ENCODE measurements at regions of chr9 and their contacts with region 1.

Region 1: DNA sequence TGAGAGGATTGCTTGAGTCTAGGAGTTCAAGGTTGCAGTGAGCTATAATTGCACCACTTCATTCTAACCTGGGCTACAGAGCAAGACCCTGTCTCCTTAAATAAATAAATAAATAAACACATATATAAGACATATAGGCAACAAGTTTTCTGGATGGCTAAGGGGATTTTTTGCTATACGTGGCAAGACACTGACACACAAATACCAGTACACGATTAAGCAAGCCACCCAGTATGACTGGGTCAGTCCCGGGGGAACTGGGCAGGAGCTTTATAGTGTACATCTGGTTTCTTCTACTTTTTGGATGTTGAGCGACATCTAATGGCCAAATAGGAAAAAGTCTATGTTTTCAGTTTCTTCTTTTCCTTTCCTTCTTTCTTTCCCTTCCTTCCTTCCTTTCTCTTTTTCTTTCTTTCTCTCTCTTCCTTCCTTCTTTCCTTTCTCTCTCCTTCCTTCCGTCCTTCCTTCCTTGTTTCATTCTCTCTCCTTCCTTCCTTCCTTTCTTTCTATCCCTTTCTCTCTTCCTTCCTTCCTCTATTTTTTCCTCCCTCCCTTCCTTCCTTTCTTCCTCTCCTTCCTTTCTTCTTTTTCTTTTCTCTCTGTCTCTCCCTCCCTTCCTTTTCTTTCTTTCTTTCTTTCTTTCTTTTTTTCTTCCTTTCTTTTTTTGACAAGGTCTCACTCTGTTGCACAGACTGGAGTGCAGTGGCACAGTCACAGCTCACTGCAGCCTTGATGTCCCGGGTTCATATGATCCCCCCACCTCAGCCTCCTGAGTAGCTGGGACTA is 47.0 kb upstream of the PLIN2 start:
- DNase-seq: peak; percentile 74
- ATAC-seq: peak; percentile 95
- H3K4me3 Mint-ChIP-seq: peak overlapping the region; percentile 48
- H3K27ac Mint-ChIP-seq: peak overlapping the region; percentile 41
- H3K4me1 Mint-ChIP-seq: peaks cover 25% of the 10 kb centered on the region
- H3K27me3 Mint-ChIP-seq: no peaks in the 10 kb centered on the region

Region 2: DNA sequence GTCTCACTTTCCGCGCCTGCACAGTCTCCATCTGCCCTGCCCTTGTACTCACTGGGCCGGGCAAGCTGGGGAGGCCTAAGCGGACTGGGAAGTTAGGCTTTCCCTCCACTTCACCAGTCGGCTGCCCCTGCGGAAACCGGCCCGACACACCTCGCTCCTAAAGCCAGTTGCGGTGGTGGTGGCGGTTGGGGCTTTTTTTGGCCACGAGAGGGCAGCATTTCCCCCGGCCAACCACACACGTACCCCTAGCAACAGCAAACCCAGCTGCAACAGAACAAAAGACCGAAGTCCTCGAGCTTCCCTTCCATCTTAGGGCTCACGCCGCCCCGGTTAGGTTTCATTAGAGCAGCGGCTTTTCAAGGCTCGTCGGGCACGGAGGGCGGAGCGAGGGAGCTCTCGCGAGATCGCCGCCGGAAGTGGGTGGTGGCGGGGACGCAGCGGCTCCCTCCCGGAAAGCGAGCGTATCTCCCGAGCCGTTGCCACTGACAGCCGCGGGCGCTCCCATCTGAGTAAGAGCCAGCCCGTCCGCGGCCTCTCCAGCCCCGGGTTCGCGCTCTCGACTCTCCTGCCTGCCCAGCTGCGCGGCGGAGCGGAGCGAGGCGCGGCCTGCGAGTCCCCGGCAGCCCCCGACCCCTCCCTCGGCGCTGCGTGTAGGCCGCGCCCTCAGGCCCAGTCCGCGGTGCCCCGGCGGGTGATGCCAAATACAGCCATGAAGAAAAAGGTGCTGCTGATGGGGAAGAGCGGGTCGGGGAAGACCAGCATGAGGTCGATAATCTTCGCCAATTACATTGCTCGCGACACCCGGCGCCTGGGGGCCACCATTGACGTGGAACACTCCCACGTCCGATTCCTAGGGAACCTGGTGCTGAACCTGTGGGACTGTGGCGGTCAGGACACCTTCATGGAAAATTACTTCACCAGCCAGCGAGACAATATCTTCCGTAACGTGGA is 125.1 kb before region 1 on chr9 and contains the start of gene RRAGA:
- CTCF ChIA-PET with region 1: interaction called, 43 read pairs
- DNase-seq: peak; percentile 96
- ATAC-seq: peak; percentile 92
- H3K4me3 Mint-ChIP-seq: peak within 1 kb of the TSS; percentile 93
- H3K27ac Mint-ChIP-seq: peak within 1 kb of the TSS; percentile 99
- H3K4me1 Mint-ChIP-seq: peaks cover 28% of the 10 kb centered on the region
- H3K27me3 Mint-ChIP-seq: no peaks in the 10 kb centered on the region
- total RNA-seq, gene RRAGA: 43.5 to 49.7 TPM

Region 3: GRCh38 chr9:19085295-19085694 is 89.0 kb before region 1 on chr9:
- CTCF ChIA-PET with region 1: interaction called, 20 read pairs
- DNase-seq: no peak
- ATAC-seq: peak; percentile 47
- H3K4me3 Mint-ChIP-seq: no peak overlapping the region
- H3K27ac Mint-ChIP-seq: peak overlapping the region; percentile 2
- H3K4me1 Mint-ChIP-seq: no peaks in the 10 kb centered on the region
- H3K27me3 Mint-ChIP-seq: no peaks in the 10 kb centered on the region

Region 4: DNA sequence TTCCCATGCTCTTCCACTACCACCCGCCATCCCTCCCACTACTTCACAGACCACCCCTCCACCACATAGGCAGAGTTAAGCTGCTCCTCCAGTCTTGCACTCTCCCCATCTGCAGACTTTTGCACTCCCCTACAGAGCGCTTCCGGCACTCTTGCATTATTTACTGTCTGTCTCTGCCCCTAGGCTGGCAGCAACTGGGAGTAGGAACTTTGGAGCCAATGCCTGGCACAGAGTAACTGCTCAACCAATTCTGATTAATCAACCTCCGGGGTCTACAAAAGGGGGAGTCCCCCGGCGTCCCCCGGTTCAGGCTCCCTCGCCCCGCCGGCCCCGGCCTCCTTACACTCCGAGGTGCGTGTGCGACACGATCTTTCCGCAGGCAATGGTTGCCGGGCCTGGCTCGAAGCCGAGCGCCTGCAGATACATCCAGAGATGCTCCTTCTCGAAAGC is 72.1 kb before region 1 on chr9:
- CTCF ChIA-PET with region 1: interaction called, 11 read pairs
- DNase-seq: peak; percentile 70
- ATAC-seq: peak; percentile 37
- H3K4me3 Mint-ChIP-seq: peak overlapping the region; percentile 85
- H3K27ac Mint-ChIP-seq: peak overlapping the region; percentile 97
- H3K4me1 Mint-ChIP-seq: peaks cover 38% of the 10 kb centered on the region
- H3K27me3 Mint-ChIP-seq: no peaks in the 10 kb centered on the region

Region 5: GRCh38 chr9:19127881-19128500 is 46.3 kb before region 1 on chr9:
- CTCF ChIA-PET with region 1: interaction called, 12 read pairs
- DNase-seq: peak; percentile 55
- ATAC-seq: peak; percentile 27
- H3K4me3 Mint-ChIP-seq: peak overlapping the region; percentile 98
- H3K27ac Mint-ChIP-seq: peak overlapping the region; percentile 98
- H3K4me1 Mint-ChIP-seq: peaks cover 55% of the 10 kb centered on the region
- H3K27me3 Mint-ChIP-seq: no peaks in the 10 kb centered on the region

Region 6: GRCh38 chr9:19161257-19162025 is 12.9 kb before region 1 on chr9:
- CTCF ChIA-PET with region 1: interaction called, 12 read pairs
- DNase-seq: peak; percentile 80
- ATAC-seq: peak; percentile 98
- H3K4me3 Mint-ChIP-seq: peak overlapping the region; percentile 33
- H3K27ac Mint-ChIP-seq: peak overlapping the region; percentile 87
- H3K4me1 Mint-ChIP-seq: peaks cover 23% of the 10 kb centered on the region
- H3K27me3 Mint-ChIP-seq: no peaks in the 10 kb centered on the region

Region 7: DNA sequence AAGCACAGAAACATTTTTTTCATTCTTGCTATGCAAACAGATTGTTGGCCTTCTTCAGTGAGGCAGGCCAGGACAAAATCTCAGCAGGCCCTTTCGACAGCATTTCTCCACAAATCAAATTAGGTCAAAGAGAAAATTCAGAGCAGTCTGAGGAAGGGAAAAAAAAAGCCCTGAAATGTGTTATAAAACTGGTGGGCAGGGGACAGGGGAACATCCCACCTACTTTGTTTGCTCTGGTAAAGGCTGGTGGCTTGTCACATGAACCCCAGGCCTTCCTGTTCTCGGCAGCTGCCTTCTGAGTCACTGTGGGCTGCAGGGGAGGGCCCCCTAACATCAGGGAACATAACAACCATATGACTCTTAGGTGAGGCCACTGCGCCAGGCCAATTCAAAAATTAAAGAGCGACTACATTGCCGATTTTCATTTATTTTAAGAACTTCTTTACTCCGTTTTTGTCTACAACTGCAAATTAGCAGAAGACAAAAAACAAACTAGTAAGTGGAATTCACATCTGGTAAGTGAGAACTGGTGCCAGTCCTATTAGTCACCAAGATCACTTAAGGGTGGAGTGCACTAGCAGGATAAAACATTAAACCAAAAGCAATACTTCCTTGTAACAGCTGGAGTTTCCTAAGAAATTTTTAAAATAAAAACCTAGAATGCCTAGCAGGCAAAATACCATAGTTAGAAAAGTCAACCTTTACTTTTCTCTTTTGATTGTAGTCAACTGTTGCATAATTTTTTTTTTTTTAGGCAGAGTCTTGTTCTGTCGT is 10.0 kb after region 1 on chr9:
- CTCF ChIA-PET with region 1: interaction called, 33 read pairs
- DNase-seq: peak; percentile 93
- ATAC-seq: peak; percentile 100
- H3K4me3 Mint-ChIP-seq: peak overlapping the region; percentile 57
- H3K27ac Mint-ChIP-seq: peak overlapping the region; percentile 97
- H3K4me1 Mint-ChIP-seq: peaks cover 27% of the 10 kb centered on the region
- H3K27me3 Mint-ChIP-seq: no peaks in the 10 kb centered on the region

Region 8: GRCh38 chr9:19689328-19690101 is 515.2 kb after region 1 on chr9:
- CTCF ChIA-PET with region 1: no interaction called
- DNase-seq: no peak
- ATAC-seq: no peak
- H3K4me3 Mint-ChIP-seq: no peak overlapping the region
- H3K27ac Mint-ChIP-seq: no peak overlapping the region
- H3K4me1 Mint-ChIP-seq: no peaks in the 10 kb centered on the region
- H3K27me3 Mint-ChIP-seq: peaks cover 4% of the 10 kb centered on the region